Activated CD8-positive, alpha-beta memory T cell treated with anti-CD3 and anti-CD28 coated beads, Interleukin-2, amount 10 ng/mL, durations not matched to agents 7 days and 5 days (primary cell): ENCODE measurements at regions of chr7 and their contacts with region 1.

Region 1: DNA sequence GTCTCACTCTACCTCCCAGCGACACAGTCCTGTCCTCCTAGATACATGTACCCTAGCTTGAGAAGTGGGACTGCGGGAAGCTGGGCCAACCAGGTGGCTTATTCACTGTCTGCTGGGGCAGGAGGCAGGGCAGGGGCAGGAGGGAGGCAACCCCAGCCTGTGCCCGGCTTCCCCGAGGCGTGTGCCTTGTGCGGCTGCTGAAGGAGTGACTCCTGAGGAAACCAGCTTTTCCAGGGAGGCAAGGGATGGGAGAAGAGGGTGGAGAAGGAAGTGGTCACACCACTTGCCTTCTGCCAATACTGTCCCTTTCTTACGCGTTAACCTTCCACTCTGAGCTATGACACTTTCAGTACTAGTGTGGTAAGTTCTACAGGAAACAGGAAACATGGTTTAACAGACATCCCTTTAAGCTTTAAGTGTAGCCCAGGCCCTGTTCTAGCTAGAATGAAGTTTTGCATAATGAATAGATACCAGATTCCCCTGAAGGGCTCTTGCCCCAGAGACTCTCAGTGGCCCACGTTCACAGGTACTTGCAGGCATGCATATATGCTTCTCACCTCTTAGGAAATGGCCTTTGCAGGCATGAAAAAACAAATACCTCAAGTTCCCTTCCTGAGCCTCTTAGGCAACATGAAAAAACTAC is 40.6 kb downstream of the SYPL1 start:
- DNase-seq: peak; percentile 66
- ATAC-seq: peak; percentile 98
- H3K4me3 Mint-ChIP-seq: peak overlapping the region; percentile 68
- H3K27ac Mint-ChIP-seq: peak overlapping the region; percentile 94
- H3K4me1 Mint-ChIP-seq: peaks cover 42% of the 10 kb centered on the region
- H3K27me3 Mint-ChIP-seq: no peaks in the 10 kb centered on the region

Region 2: DNA sequence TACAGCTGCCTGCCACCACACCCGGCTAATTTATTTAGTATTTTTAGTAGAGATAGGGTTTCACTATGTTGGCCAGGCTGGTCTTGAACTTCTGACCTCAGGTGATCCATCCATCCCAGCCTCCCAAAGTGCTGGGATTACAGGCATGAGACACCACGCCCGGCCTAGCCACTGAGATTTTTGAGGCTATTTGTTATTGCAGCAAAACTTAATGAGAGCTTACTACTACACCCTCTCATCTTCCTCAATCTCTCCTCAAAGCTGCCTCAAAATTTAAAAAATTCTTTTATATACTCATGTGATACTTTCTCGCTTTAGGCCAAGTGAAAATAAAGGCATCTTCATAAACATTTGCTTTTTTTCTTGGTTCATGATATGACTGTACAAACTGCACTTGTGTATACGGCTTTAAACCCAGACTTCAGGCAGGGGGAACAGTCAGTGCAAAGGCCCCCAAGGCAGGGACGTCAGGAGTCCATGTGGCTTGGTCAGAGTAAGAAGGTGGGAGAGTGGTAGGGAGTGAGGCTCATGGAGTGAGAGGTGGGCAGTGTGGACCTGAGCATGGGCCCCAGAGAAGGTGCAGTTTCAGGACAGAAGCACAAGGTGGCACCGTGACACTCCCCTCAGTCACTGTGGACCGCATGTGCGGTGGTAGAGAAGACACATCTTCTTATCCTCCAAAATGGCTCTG is 14.8 kb before region 1 on chr7:
- CTCF ChIA-PET with region 1: interaction called, 18 read pairs
- DNase-seq: peak; percentile 81
- ATAC-seq: peak; percentile 99
- H3K4me3 Mint-ChIP-seq: no peak overlapping the region
- H3K27ac Mint-ChIP-seq: peak overlapping the region; percentile 35
- H3K4me1 Mint-ChIP-seq: peaks cover 28% of the 10 kb centered on the region
- H3K27me3 Mint-ChIP-seq: peaks cover 20% of the 10 kb centered on the region

Region 3: DNA sequence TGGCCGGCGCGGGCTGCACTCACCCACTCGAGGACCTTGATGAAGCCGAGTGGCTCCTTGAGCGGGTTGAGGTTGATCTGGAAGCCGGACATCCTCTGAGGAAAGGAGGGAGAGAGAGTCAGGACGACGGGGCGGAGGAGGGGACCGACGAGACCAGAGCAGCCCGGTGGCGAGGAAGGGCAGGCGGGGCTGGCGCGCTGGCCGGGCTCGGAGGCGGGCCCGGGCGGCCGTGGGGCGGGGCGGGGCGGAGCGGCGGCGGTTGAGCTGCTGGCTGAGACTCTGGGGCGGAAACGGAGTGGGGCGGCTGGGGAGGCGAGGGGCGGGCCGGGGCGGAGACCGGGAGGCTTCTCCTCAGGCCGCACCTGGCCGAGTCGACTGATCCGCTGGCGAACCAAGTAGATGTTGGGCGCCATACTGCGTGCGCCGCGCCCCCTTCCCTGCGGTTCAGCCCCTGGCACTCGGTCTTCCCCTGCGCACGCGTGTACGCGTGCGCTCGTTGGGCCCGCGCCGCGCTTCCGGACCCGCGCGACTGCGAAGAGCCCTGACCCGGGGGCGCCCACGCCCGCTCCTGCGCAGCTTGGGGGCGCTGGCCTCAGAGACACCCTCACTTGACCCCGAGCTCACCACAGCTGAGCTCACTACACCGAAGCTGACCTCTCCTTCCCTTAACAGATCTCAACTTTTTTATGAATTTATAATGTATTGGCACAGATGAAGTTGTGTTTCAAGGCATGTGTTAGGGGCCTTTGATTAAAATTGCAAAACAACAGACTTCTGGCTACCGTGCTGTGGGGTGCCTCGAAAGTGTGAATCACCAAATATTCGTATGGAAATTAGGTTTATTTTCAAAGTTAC is 40.9 kb after region 1 on chr7 and contains the start of gene SYPL1:
- CTCF ChIA-PET with region 1: interaction called, 30 read pairs
- DNase-seq: peak; percentile 94
- ATAC-seq: peak; percentile 91
- H3K4me3 Mint-ChIP-seq: peak within 1 kb of the TSS; percentile 79
- H3K27ac Mint-ChIP-seq: peak within 1 kb of the TSS; percentile 87
- H3K4me1 Mint-ChIP-seq: peaks cover 53% of the 10 kb centered on the region
- H3K27me3 Mint-ChIP-seq: peaks cover 24% of the 10 kb centered on the region
- total RNA-seq, gene SYPL1: 21.9 to 24.1 TPM